Esophagus muscularis mucosa (tissue), 4 donors: ENCODE measurements at regions of chr4 and their contacts with region 1.

Region 1: DNA sequence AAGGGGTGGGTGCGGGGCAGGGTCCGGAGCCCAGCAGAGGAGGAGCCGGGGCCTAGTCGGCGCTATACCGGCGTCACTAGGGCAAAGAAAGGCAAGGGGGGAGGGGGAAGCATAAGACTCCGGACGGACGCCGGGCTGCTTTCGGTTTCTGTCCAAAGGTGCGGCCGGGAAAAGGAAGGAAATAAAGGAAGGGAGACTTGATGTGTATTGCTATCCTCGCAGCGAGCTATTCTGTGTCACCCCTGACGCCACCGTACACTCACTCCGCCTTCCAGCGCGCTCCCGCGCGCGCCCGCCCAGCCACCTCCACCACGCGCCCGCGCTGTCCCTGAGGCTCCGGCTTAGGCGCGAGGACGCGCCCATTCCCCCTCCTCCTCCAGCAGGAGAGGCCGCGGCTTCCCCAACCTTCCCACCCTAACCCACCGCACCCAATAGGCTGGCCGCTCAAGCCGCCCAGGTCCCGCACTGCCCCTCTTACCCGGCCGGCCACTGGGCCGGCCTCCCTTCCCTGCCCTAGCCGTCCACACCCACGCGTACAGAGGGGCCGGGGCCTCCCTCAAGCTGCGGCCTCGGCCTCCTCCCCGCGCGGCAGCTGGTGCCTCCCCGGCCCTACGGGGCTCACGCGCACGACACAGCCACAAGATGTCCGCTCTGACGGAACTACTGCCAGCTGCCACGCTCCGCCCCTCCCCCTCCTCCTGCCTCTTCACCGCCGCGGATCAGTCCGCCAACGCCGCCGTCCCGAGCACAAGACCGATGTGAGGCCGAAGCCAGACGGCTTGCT is at the start of gene UBE2D3:
- DNase-seq: peak; percentile 98
- H3K4me3 ChIP-seq: peak within 1 kb of the TSS; percentile 64 to 98 (median 90)
- H3K27ac ChIP-seq: peak within 1 kb of the TSS; percentile 94 to 100 (median 100)
- H3K4me1 ChIP-seq: peaks cover 21 to 41% (median 37%) of the 10 kb centered on the region in 4 donors
- H3K27me3 ChIP-seq: no peaks in the 10 kb centered on the region
- CTCF ChIP-seq: peak in 2 of 3 experiments; percentile 7 to 9
- EP300 ChIP-seq: no peak
- POLR2A ChIP-seq: peak; percentile 88
- total RNA-seq, gene UBE2D3: 332 to 438 (median 394) TPM

Region 2: GRCh38 chr4:102620697-102621497 is 206.2 kb before region 1 on chr4:
- intact Hi-C with region 1: loop called (anchors 10 kb)
- DNase-seq: no peak
- H3K4me3 ChIP-seq: no peak overlapping the region
- H3K27ac ChIP-seq: peak overlapping the region in 1 of 4 donors; percentile 36
- H3K4me1 ChIP-seq: peaks cover 0 to 13% (median 9%) of the 10 kb centered on the region in 4 donors
- H3K27me3 ChIP-seq: no peaks in the 10 kb centered on the region
- CTCF ChIP-seq: peak; percentile 59 to 67 (median 60)
- EP300 ChIP-seq: no peak
- POLR2A ChIP-seq: no peak

Region 3: GRCh38 chr4:102760645-102761295 is 66.3 kb before region 1 on chr4 and contains the start of gene MANBA:
- intact Hi-C with region 1: loop called (anchors 2 kb)
- DNase-seq: no peak
- H3K4me3 ChIP-seq: peak within 1 kb of the TSS; percentile 77 to 91 (median 86)
- H3K27ac ChIP-seq: peak within 1 kb of the TSS; percentile 78 to 90 (median 83)
- H3K4me1 ChIP-seq: peaks cover 9 to 26% (median 23%) of the 10 kb centered on the region in 4 donors
- H3K27me3 ChIP-seq: no peaks in the 10 kb centered on the region
- CTCF ChIP-seq: peak in 1 of 3 experiments; percentile 5
- EP300 ChIP-seq: no peak
- POLR2A ChIP-seq: no peak
- total RNA-seq, gene MANBA: 22.1 to 24.9 (median 24.5) TPM

Region 4: GRCh38 chr4:102868781-102869568 is 41.9 kb after region 1 on chr4 and contains the start of gene CISD2:
- intact Hi-C with region 1: loop called (anchors 1 kb)
- DNase-seq: peak; percentile 97
- H3K4me3 ChIP-seq: peak within 1 kb of the TSS; percentile 68 to 79 (median 73)
- H3K27ac ChIP-seq: peak within 1 kb of the TSS; percentile 95 to 97 (median 96)
- H3K4me1 ChIP-seq: peaks cover 21 to 26% (median 23%) of the 10 kb centered on the region in 4 donors
- H3K27me3 ChIP-seq: no peaks in the 10 kb centered on the region
- CTCF ChIP-seq: no peak
- EP300 ChIP-seq: no peak
- POLR2A ChIP-seq: peak; percentile 64
- total RNA-seq, gene CISD2: 6.6 to 13.3 (median 10.3) TPM

Region 5: GRCh38 chr4:103008875-103009729 is 182.0 kb after region 1 on chr4:
- intact Hi-C with region 1: loop called (anchors 2 kb)
- DNase-seq: no peak
- H3K4me3 ChIP-seq: no peak overlapping the region
- H3K27ac ChIP-seq: no peak overlapping the region
- H3K4me1 ChIP-seq: peaks cover 19 to 29% (median 21%) of the 10 kb centered on the region in 4 donors
- H3K27me3 ChIP-seq: no peaks in the 10 kb centered on the region
- CTCF ChIP-seq: peak; percentile 62 to 73 (median 70)
- EP300 ChIP-seq: no peak
- POLR2A ChIP-seq: no peak

Region 6: DNA sequence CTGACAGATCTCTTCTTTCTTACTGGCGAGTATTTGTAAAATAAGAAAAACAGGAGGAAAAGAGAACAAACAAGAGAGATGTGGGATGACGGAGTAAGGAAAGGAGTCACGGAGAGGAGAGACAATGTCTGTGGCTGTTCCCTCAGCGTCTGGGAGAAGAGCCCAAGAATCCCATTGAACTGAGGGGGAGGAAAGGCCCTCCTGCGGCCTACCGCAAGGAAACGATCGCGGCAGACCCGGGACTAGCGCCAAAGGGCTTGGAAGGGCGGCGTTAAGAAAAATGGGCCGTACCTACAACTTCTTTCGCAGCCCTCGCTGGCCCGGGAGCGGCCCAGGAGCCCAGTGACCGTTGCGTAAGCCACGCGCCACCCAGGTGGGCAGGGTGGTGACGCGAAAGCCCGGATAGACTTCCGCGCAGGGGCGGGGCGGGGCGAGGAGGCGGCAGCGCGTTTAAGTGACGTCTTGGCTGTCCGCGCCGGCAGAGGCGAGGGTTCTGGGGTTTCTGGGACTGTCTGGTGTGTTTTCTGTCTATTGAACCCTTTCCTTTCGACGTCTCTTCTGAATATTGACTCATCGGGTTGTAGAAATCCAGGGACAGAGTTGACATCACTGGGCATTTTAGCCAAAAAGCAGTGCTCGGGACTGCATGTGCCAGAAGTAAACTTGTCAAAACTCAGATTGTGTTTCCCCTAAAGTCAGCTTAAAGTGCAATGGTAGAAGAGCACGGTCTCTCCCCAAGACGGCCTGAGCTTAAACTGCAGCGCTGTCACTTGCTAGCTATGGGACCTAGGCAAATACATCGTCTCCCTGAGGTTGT is 192.4 kb after region 1 on chr4 and contains the start of gene SLC9B1:
- intact Hi-C with region 1: loop called (anchors 2 kb)
- DNase-seq: peak; percentile 97
- H3K4me3 ChIP-seq: peak within 1 kb of the TSS; percentile 53 to 63 (median 56)
- H3K27ac ChIP-seq: peak within 1 kb of the TSS; percentile 89 to 90 (median 90)
- H3K4me1 ChIP-seq: peaks cover 7 to 18% (median 14%) of the 10 kb centered on the region in 4 donors
- H3K27me3 ChIP-seq: no peaks in the 10 kb centered on the region
- CTCF ChIP-seq: no peak
- EP300 ChIP-seq: peak; percentile 69
- POLR2A ChIP-seq: no peak
- total RNA-seq, gene SLC9B1: 0.29 to 1.3 (median 0.99) TPM in 3 of 4 donors, not detected in the other